HEK293 (cell line): ENCODE measurements at regions of chr19 and their contacts with region 1.

Region 1: DNA sequence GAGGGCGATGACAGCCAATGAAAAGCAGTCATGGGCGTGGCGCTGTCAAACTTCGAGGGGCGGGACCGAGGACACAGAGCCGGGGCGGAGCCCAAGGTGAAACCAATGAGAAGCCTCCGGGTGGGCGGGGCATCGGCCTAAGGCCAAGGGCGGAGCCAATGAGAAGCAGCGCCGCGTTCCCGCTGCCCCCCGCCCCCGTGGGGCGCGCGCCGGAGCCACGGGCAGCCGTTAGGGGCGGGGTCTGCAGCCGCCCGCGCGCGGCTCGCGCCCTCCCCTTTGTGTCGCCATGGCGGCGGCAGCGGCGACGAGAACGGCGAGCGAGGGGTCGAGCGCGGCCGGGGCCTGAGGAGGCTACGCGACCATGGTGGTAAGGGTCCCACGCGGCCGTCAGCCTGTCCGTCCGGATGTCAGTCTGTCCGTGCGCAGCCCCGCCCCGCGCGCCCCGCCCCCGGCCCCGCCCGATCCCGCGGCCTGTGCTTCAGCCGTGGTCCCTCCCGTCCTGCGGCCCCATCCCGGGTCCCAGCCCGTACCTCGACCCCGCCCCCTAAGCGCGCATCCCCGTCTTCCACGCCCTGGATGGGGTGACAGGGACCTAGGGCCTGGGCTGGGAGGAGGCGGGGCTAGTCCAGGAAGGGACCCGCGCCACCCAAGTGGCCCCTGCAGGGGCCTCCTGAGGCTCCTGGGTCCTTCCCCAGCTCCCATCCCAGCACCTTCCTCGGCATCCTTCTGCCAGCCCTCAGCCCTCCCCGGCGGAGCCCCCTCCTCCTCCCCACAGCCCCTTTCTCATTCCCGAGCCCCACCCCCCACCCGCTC is at the start of gene ARHGAP33:
- H3K4me3 ChIP-seq: peak within 1 kb of the TSS; percentile 59
- H3K27ac ChIP-seq: peak within 1 kb of the TSS; percentile 48; the same call in 1 of the 2 replicates
- H3K4me1 ChIP-seq: peaks cover 24% of the 10 kb centered on the region
- CTCF ChIP-seq: no peak

Region 2: GRCh38 chr19:35757749-35758608 is 17.5 kb before region 1 on chr19 and contains the start of gene PROSER3:
- CTCF ChIA-PET with region 1: no interaction called
- POLR2A ChIA-PET with region 1: interaction called, 23 read pairs
- H3K4me3 ChIP-seq: peak within 1 kb of the TSS; percentile 71
- H3K27ac ChIP-seq: peak within 1 kb of the TSS; percentile 97
- H3K4me1 ChIP-seq: peaks cover 15% of the 10 kb centered on the region
- CTCF ChIP-seq: no peak